Activated T-helper 1 cell treated with anti-CD3 and anti-CD28 coated beads, Interleukin-12 subunit alpha, Interleukin-12 subunit beta, Interleukin-2, Interleukin-4 antibody, amounts not matched to agents 30 ng/mL and 10 ng/mL and 1 ng/mL, durations not matched to agents 14 hours and 24 hours and 36 hours (primary cell): ENCODE measurements at regions of chr15 and their contacts with region 1.

Region 1: DNA sequence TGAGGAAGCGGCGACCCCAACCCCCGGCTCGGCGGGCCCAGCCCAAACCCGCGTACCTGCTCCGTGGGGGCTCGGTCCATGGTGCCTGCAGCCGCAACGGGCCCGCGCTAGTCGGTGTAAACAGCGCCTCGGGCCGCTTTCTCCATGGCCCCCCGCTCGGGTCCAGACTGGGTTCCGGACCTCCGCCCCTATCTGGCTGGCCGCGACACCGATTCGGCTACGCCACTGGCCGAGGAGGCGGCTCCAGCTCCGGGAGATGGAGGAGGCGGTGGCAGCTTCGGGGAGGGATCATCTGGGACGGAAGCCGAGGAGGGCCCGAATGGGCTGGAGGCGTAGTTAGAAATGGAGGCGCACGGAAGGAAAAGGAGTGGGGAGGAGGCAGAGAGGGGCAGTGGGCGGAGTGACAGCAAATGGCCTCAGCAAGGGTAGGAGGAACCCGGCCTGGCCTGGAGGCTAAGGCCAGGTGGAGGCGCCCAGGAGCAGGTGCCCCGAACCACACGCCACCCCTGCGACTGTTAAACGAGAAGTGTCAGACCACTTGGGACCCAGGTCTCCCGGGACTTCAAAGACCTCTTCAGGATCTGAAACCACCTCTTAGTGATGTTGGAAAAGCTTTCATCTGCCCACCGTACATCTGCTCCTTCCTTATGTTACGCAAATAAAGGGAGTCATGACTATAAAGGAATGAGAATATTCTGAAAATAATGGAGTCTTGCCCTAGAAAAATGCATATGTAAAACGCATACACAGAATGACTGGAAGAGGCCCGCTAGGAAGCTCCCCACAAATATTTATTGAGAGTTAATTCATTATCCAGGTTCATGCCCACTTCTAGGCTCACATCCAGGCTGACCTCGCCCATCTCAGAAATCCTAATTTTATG is at the start of gene SECISBP2L:
- DNase-seq: peak; percentile 87
- H3K4me3 Mint-ChIP-seq: peak within 1 kb of the TSS; percentile 96
- H3K27ac Mint-ChIP-seq: peak within 1 kb of the TSS; percentile 91
- H3K4me1 Mint-ChIP-seq: peaks cover 35% of the 10 kb centered on the region
- H3K27me3 Mint-ChIP-seq: no peaks in the 10 kb centered on the region
- total RNA-seq, gene SECISBP2L: 38.0 and 44.8 TPM in 2 replicates

Region 2: GRCh38 chr15:48373821-48374451 is 672.5 kb before region 1 on chr15:
- intact Hi-C with region 1: no loop called
- DNase-seq: no peak
- H3K4me3 Mint-ChIP-seq: no peak overlapping the region
- H3K27ac Mint-ChIP-seq: no peak overlapping the region
- H3K4me1 Mint-ChIP-seq: no peaks in the 10 kb centered on the region
- H3K27me3 Mint-ChIP-seq: peaks cover 16% of the 10 kb centered on the region

Region 3: DNA sequence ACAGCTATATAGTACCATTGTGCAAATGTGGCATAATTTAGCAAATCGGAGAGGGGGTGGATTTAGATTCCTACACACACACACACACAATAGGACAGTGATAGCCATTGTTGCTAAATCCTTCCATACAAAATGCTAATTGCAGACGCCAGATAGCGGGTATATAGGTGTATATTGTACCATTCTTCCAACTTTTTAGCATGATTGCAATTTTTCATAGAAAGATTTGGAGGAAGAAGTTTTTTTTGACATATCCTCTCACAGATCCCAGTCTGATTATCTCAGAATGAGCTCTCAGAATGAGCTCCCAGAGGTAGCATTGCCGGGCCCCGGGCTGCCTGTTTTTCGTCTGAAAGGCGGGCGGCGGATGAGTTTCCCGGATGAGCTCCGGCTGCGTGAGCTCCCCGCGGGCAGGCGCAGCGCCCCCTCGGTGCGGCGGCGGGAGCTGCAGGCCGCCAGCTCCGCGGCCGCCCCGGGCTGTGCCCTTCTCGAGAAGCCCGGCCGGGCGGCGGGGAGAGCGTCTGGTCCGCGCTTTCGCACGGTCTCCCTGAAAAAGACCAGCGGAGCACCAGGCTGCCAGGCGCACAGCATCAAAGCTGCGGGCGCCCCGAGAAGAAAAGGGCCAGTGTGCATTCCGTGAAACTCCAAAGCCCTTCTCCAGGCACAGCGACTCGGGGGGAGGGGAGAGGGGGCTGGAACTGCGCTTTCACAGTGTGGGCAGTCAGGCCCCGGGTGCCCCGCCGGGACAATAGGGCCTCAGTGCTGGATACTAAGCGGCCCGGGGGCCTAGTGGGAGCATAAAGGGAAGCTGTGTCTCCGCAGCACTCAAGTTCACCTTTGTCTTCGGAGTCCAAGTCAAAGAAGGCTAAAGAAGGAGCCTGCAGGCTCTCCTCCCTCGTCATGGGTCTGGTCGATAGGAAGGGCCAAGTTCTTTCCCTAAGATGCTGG is 70.7 kb before region 1 on chr15:
- intact Hi-C with region 1: loop called (anchors 2 kb)
- DNase-seq: peak; percentile 77
- H3K4me3 Mint-ChIP-seq: peak overlapping the region; percentile 60
- H3K27ac Mint-ChIP-seq: peak overlapping the region; percentile 19
- H3K4me1 Mint-ChIP-seq: peaks cover 11% of the 10 kb centered on the region
- H3K27me3 Mint-ChIP-seq: no peaks in the 10 kb centered on the region

Region 4: GRCh38 chr15:48992545-48992944 is 53.9 kb before region 1 on chr15:
- intact Hi-C with region 1: no loop called
- DNase-seq: no peak
- H3K4me3 Mint-ChIP-seq: no peak overlapping the region
- H3K27ac Mint-ChIP-seq: peak overlapping the region; percentile 63
- H3K4me1 Mint-ChIP-seq: no peaks in the 10 kb centered on the region
- H3K27me3 Mint-ChIP-seq: no peaks in the 10 kb centered on the region

Region 5: DNA sequence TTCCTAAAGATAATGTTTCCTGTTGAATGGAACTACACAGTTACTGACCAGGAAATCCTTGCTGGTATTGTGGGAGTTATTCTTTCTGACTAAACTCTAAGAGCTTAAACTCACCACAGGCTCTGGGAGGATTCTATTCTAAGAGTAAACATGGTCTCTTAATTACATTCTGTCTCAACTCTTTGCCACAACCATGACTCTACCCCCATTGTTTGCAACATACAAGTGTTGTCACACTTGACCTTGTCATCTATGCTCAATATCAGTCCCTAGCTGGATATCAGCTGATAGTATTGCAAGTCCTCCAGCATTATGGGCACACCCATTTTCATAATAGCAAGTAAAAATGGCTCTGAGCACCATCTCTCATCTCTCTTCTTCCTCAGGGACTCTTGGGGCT is 29.4 kb after region 1 on chr15:
- intact Hi-C with region 1: no loop called
- DNase-seq: no peak
- H3K4me3 Mint-ChIP-seq: no peak overlapping the region
- H3K27ac Mint-ChIP-seq: no peak overlapping the region
- H3K4me1 Mint-ChIP-seq: no peaks in the 10 kb centered on the region
- H3K27me3 Mint-ChIP-seq: peaks cover 12% of the 10 kb centered on the region